ENCODE measurements at regions of chr11 and their contacts with region 1.

Region 1: GRCh38 chr11:130145975-130146776 is 13.4 kb upstream of the ST14 start:
- DNase-seq: peak; percentile 74 to 80
- H3K4me3 ChIP-seq: no peak overlapping the region
- H3K27ac ChIP-seq: peak overlapping the region; percentile 76 to 81
- H3K4me1 ChIP-seq: no peaks in the 10 kb centered on the region
- H3K27me3 ChIP-seq: no peaks in the 10 kb centered on the region
- CTCF ChIP-seq: peak in 1 of 3 donors; percentile 43
- POLR2A ChIP-seq: no peak

Region 2: DNA sequence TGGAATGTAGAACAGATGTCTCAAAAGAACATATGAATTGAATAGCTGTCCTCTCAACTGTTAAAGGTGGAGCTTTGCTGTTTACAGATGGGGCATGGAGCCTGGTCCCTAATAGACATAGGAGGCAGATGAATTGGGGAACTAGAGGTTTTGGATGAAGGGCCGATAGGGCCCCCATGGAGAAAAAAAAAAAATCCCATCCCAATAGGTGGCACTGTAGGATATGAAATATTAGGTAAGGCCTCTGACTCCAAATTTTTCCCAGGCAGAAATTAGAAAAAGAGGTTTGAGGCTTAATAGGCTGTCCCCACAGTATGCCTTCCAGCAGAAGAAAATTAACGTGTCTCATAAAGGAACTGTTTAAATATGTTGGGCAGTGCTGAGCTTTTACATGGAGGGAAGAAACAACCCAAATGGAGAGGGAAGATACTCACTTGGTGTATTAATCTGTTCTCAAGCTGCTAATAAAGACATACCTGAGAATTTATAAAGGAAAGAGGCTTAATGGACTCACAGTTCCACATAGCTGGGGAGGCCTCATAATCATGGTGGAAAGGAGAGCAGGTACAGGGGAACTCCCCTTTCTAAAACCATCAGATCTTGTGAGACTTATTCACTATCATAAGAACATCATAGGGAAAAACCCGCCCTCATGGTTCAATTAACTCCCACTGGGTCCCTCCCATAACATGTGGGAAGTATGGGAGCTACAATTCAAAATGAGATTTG is 360.6 kb before region 1 on chr11:
- intact Hi-C with region 1: loop called (anchors 5 kb)
- DNase-seq: no peak
- H3K4me3 ChIP-seq: no peak overlapping the region
- H3K27ac ChIP-seq: no peak overlapping the region
- H3K4me1 ChIP-seq: no peaks in the 10 kb centered on the region
- H3K27me3 ChIP-seq: no peaks in the 10 kb centered on the region
- CTCF ChIP-seq: peak in 1 of 3 donors; percentile 12
- POLR2A ChIP-seq: no peak

Region 3: DNA sequence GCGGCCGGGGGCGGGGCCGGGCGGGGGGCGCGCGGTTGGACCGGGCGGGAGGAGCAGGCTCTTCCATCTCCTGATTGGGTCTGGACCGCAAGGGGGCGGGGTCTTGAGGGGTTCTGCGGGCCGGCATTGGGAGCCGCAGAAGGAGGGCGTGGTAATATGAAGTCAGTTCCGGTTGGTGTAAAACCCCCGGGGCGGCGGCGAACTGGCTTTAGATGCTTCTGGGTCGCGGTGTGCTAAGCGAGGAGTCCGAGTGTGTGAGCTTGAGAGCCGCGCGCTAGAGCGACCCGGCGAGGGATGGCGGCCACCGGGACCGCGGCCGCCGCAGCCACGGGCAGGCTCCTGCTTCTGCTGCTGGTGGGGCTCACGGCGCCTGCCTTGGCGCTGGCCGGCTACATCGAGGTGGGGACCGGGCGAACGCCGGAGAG is 76.5 kb before region 1 on chr11 and contains the start of gene APLP2:
- intact Hi-C with region 1: no loop called
- DNase-seq: peak; percentile 99 to 100
- H3K4me3 ChIP-seq: peak within 1 kb of the TSS; percentile 82 to 97 (median 89)
- H3K27ac ChIP-seq: peak within 1 kb of the TSS; percentile 94 to 96
- H3K4me1 ChIP-seq: peaks cover 0 to 17% of the 10 kb centered on the region in 2 donors
- H3K27me3 ChIP-seq: no peaks in the 10 kb centered on the region
- CTCF ChIP-seq: no peak
- POLR2A ChIP-seq: peak; percentile 70
- total RNA-seq, gene APLP2: 305 to 560 (median 418) TPM